ENCODE measurements at regions of chr5 and their contacts with region 1.

Region 1: GRCh38 chr5:5421961-5422818 is at the start of gene ICE1:
- DNase-seq: peak; percentile 95
- H3K4me3 ChIP-seq: peak within 1 kb of the TSS; percentile 68 to 87 (median 72)
- H3K27ac ChIP-seq: peak within 1 kb of the TSS; percentile 85
- H3K4me1 ChIP-seq: peaks cover 23% of the 10 kb centered on the region
- H3K27me3 ChIP-seq: no peaks in the 10 kb centered on the region
- CTCF ChIP-seq: peak in 1 of 2 donors; percentile 5
- total RNA-seq, gene ICE1: 28.5 to 30.3 TPM

Region 2: DNA sequence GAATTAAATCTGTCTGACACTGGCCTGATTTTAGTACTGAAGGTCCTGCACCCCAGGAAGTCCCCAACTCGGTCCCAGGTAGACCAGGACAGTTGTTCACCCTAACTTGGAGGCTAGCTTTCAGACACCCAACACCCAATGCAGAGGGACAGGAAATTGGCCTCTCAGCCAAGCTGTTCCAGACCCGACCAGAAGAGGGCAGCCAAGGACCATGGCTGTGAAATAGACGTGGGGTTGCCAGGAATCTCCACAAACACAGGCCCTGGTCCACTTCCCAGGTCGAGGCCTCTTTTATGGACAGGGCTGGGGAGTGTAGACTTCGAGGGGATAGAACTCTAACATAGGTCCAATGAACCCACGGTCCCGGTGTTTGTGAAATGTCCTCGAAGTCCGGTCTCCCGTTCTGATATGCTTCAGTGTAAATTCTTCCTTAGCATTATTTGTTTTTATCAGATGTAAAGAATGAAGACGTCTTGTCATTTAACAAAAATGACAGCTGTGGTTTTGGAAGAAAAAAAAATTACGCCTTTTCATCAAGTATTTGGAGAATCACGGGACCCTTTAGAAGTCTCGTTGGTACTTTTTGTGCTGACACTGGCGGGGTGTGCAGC is 542.4 kb before region 1 on chr5:
- CTCF ChIA-PET with region 1: no interaction called
- dilution Hi-C with region 1: no loop called
- in situ Hi-C with region 1: loop called (anchors 10 to 25 kb)
- intact Hi-C with region 1: loop called (anchors 1 kb)
- DNase-seq: peak; percentile 43
- H3K4me3 ChIP-seq: no peak overlapping the region
- H3K27ac ChIP-seq: no peak overlapping the region
- H3K4me1 ChIP-seq: no peaks in the 10 kb centered on the region
- H3K27me3 ChIP-seq: no peaks in the 10 kb centered on the region
- CTCF ChIP-seq: peak; percentile 96 to 98

Region 3: DNA sequence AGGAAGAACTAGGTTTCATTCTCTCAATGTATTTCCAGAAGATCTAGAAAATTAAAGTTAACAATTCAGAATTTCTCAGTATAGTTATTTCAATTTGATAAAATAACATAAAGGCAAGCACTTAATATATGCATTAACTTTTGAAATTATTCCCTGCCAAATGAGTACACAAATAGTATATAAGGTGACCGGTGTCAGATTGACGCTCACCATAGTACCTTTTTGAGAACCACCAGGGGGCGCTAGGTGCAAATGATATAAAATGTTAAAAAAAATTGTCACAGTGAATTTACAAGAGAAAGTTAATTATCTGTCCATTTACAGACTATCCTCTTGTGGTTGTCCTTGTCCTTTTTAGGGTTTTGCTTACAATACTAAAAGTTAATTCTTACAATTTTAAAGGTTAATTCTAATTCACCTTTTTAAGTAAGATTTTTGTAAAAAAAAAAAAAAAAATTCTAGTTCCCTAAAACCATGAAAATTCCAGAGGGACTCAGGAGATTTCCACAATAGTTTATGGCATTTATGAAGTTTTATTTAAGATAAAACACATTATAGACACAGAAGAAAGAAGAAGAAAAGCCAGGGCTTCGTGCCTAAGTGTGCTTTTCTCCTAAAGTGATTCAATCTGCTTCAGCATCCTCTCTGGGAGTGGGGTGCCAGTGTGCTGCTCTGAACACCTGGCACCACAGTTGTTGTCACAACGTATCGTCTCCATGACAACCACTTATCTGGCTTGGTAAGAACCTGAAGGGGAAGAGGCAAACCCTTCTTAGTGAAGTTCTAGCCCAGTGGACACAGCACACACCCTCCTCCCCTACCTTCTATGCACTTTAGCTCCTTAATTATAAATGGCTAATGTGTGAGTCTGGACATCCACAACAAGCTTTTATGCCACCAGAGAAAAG is 280.3 kb before region 1 on chr5:
- CTCF ChIA-PET with region 1: no interaction called
- dilution Hi-C with region 1: no loop called
- in situ Hi-C with region 1: loop called in 1 of 2 experiments (anchors 10 kb)
- intact Hi-C with region 1: loop called (anchors 1 kb)
- DNase-seq: peak; percentile 29
- H3K4me3 ChIP-seq: no peak overlapping the region
- H3K27ac ChIP-seq: no peak overlapping the region
- H3K4me1 ChIP-seq: peaks cover 7% of the 10 kb centered on the region
- H3K27me3 ChIP-seq: peaks cover 20% of the 10 kb centered on the region
- CTCF ChIP-seq: peak; percentile 58 to 62

Region 4: GRCh38 chr5:5270958-5271605 is 151.1 kb before region 1 on chr5:
- CTCF ChIA-PET with region 1: no interaction called
- dilution Hi-C with region 1: no loop called
- in situ Hi-C with region 1: no loop called
- intact Hi-C with region 1: loop called (anchors 1 kb)
- DNase-seq: peak; percentile 91
- H3K4me3 ChIP-seq: peak overlapping the region in 2 of 3 experiments; percentile 7 to 28
- H3K27ac ChIP-seq: peak overlapping the region; percentile 51
- H3K4me1 ChIP-seq: peaks cover 11% of the 10 kb centered on the region
- H3K27me3 ChIP-seq: no peaks in the 10 kb centered on the region
- CTCF ChIP-seq: peak in 1 of 2 donors; percentile 19

Region 5: GRCh38 chr5:5331838-5332237 is 90.4 kb before region 1 on chr5:
- CTCF ChIA-PET with region 1: no interaction called
- dilution Hi-C with region 1: loop called (anchors 5 kb)
- in situ Hi-C with region 1: no loop called
- intact Hi-C with region 1: no loop called
- DNase-seq: no peak
- H3K4me3 ChIP-seq: no peak overlapping the region
- H3K27ac ChIP-seq: no peak overlapping the region
- H3K4me1 ChIP-seq: peaks cover 10% of the 10 kb centered on the region
- H3K27me3 ChIP-seq: no peaks in the 10 kb centered on the region
- CTCF ChIP-seq: no peak

Region 6: DNA sequence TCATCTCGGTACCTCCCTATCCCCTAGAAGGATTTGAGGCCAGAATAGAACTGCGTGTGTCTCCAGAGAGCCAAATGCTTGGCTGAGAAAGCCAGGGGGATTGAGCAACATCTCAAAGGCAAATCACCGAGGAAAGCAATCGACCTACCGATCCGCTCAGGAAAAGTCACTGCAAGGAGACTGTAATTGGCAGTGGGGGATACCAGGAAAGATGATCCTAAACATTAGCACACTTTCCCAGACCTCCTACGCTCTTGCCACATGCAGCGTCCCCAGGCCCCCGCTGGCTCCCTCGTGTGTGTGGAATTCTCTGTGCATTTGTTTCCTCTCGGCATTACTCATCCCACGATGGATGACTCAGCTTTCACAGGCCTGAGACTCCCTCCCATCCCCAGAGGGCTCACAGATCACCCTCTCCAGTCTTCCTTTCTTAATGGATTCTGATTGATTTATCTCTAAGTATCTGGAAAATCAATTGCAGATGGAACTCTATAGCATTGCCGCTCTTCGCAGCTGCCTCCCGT is 81.9 kb before region 1 on chr5:
- CTCF ChIA-PET with region 1: no interaction called
- dilution Hi-C with region 1: no loop called
- in situ Hi-C with region 1: no loop called
- intact Hi-C with region 1: loop called (anchors 5 kb)
- DNase-seq: peak; percentile 88
- H3K4me3 ChIP-seq: no peak overlapping the region
- H3K27ac ChIP-seq: no peak overlapping the region
- H3K4me1 ChIP-seq: peaks cover 31% of the 10 kb centered on the region
- H3K27me3 ChIP-seq: no peaks in the 10 kb centered on the region
- CTCF ChIP-seq: peak; percentile 75 to 80

Region 7: GRCh38 chr5:5387192-5387591 is 35.0 kb before region 1 on chr5:
- CTCF ChIA-PET with region 1: no interaction called
- dilution Hi-C with region 1: no loop called
- in situ Hi-C with region 1: no loop called
- intact Hi-C with region 1: no loop called
- DNase-seq: no peak
- H3K4me3 ChIP-seq: no peak overlapping the region
- H3K27ac ChIP-seq: no peak overlapping the region
- H3K4me1 ChIP-seq: no peaks in the 10 kb centered on the region
- H3K27me3 ChIP-seq: no peaks in the 10 kb centered on the region
- CTCF ChIP-seq: no peak

Region 8: GRCh38 chr5:5492087-5492933 is 70.1 kb after region 1 on chr5:
- CTCF ChIA-PET with region 1: no interaction called
- dilution Hi-C with region 1: no loop called
- in situ Hi-C with region 1: no loop called
- intact Hi-C with region 1: no loop called
- DNase-seq: peak; percentile 37
- H3K4me3 ChIP-seq: no peak overlapping the region
- H3K27ac ChIP-seq: no peak overlapping the region
- H3K4me1 ChIP-seq: peaks cover 3% of the 10 kb centered on the region
- H3K27me3 ChIP-seq: no peaks in the 10 kb centered on the region
- CTCF ChIP-seq: peak; percentile 65 to 72

Region 9: DNA sequence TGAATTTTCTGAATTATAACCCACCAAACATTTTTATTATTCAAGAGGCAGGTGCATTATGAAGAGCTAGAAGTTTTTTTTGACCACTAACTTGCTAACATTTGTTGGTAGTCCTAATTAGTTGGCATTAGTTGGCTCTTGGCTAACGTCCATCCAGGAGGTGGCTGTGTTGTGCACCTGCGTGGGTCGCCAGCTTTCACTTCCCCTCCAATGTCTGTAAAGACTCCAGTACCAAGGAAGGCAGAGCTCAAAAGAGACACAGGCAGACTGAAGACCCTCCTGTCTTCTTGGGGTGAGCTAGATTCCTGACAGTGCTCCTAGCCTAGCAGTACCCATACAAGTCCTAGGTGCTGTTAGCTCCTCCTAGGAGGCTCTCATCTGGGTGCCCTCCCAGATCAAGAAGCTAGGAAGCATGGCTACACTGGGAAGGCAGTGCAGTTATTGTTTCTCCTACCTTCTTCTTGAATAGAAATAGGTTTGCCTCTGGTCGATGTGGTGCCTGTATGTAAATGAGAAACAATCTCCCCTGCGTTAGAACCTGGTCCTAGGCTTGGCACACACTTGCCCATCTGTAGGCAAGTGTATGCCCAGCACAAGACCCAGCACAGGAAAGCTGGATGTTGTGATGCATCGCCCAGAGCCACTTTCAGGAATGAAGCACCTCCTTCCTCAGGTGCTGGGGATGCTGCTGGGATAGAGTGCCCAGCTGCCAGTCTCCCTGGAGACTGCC is 191.2 kb after region 1 on chr5:
- CTCF ChIA-PET with region 1: no interaction called
- dilution Hi-C with region 1: no loop called
- in situ Hi-C with region 1: no loop called
- intact Hi-C with region 1: no loop called
- DNase-seq: no peak
- H3K4me3 ChIP-seq: no peak overlapping the region
- H3K27ac ChIP-seq: no peak overlapping the region
- H3K4me1 ChIP-seq: no peaks in the 10 kb centered on the region
- H3K27me3 ChIP-seq: no peaks in the 10 kb centered on the region
- CTCF ChIP-seq: no peak